ENCODE measurements at regions of chr1 and their contacts with region 1.

Region 1: DNA sequence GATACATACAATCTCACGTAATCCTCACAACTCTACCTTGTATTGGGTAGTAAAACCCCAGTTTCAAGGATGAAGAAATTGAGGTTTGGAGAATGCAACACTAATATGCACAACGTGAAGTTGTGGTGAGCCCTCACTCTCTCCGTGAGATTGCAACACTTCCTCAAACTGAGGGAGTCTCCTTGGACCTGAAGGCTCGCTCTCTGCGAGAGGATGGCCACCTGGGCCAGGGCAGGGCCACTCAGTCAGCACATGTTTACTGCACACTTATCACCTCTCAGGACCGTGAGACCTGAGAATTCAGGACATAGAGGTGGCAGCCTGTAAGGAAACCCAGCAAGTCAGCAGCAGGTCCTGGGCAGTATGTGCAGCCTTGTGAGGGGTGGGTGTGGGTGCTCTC is 8.7 kb downstream of the SH3BP5L start:
- DNase-seq: no peak
- ATAC-seq: no peak
- H3K4me3 ChIP-seq: no peak overlapping the region
- H3K27ac ChIP-seq: no peak overlapping the region
- H3K4me1 ChIP-seq: peaks cover 17 to 22% of the 10 kb centered on the region in 2 donors
- H3K27me3 ChIP-seq: no peaks in the 10 kb centered on the region
- CTCF ChIP-seq: no peak
- POLR2A ChIP-seq: no peak

Region 2: GRCh38 chr1:248804771-248805681 is 12.0 kb before region 1 on chr1:
- in situ Hi-C with region 1: no loop called
- intact Hi-C with region 1: loop called (anchors 1 kb)
- DNase-seq: no peak
- ATAC-seq: no peak
- H3K4me3 ChIP-seq: no peak overlapping the region
- H3K27ac ChIP-seq: no peak overlapping the region
- H3K4me1 ChIP-seq: no peaks in the 10 kb centered on the region
- H3K27me3 ChIP-seq: no peaks in the 10 kb centered on the region
- CTCF ChIP-seq: no peak
- POLR2A ChIP-seq: no peak

Measured in gastrocnemius medialis (tissue), 4 donors.